ENCODE measurements at regions of chr3 and their contacts with region 1.

Region 1: GRCh38 chr3:128969993-128970739 is 23.7 kb downstream of the CFAP92 start:
- DNase-seq: peak; percentile 76
- H3K4me3 Mint-ChIP-seq: no peak overlapping the region
- H3K27ac Mint-ChIP-seq: no peak overlapping the region
- H3K4me1 Mint-ChIP-seq: peaks cover 13% of the 10 kb centered on the region
- H3K27me3 Mint-ChIP-seq: peaks cover 4% of the 10 kb centered on the region

Region 2: GRCh38 chr3:128647307-128647706 is 322.9 kb before region 1 on chr3:
- CTCF ChIA-PET with region 1: no interaction called
- POLR2A ChIA-PET with region 1: no interaction called
- DNase-seq: no peak
- H3K4me3 Mint-ChIP-seq: no peak overlapping the region
- H3K27ac Mint-ChIP-seq: no peak overlapping the region
- H3K4me1 Mint-ChIP-seq: peaks cover 35% of the 10 kb centered on the region
- H3K27me3 Mint-ChIP-seq: no peaks in the 10 kb centered on the region

Region 3: DNA sequence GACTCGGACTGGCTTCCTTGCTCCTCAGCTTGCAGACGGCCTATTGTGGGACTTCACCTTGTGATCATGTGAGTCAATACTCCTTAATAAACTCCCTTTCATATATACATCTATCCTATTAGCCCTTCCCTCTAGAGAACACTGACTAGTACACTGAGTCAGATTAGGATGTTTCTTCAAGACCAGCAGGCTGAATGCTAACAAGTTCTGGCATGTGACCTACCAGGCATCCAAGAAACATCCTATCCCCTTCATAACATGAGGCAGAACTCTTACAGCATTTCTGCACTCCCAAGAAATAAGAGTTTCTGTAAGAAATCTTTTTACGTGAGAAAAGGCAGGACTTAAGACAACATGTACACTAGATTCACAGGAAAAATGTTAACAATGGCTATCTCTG is 14.4 kb after region 1 on chr3:
- CTCF ChIA-PET with region 1: interaction called, 12 read pairs
- POLR2A ChIA-PET with region 1: no interaction called
- DNase-seq: no peak
- H3K4me3 Mint-ChIP-seq: no peak overlapping the region
- H3K27ac Mint-ChIP-seq: no peak overlapping the region
- H3K4me1 Mint-ChIP-seq: peaks cover 3% of the 10 kb centered on the region
- H3K27me3 Mint-ChIP-seq: no peaks in the 10 kb centered on the region

Region 4: DNA sequence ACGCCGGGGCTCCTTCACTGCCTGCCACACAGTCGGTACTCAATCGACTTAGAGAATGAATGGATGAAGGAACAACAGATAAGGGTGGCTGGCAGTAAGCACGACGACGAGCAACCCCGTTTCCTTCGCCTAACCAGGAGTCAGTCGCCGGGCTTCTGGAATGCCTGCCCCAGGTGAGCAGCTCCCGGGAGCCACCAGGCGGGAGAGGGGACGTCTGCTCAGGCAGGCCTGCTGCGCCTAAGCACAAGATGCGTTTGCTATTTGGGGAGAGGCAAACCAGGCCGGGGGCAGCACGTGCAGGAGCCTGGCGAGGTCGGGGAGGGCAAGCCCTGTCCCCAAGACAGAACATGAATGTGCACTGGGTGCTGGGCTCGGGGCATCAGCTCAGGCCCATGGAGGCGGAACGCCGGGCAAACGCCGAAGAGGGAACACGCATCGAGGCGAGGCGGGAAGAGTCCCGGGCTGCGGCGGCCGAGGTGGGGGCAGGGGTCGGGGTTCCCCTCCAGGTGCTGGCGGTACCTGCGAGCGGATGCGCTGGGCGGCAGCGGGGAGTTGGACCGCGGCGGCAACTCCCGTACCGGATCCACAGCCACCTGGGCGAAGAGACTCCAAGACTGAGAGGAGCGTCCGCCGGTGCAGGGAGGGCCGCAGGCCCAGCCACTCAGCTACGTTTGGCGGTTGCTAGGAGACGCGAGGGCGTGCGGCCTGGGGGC is 23.5 kb after region 1 on chr3 and contains the start of gene CFAP92:
- CTCF ChIA-PET with region 1: interaction called, 11 read pairs
- POLR2A ChIA-PET with region 1: interaction called, 3 read pairs
- DNase-seq: peak; percentile 93
- H3K4me3 Mint-ChIP-seq: peak within 1 kb of the TSS; percentile 43
- H3K27ac Mint-ChIP-seq: peak within 1 kb of the TSS; percentile 76
- H3K4me1 Mint-ChIP-seq: peaks cover 38% of the 10 kb centered on the region
- H3K27me3 Mint-ChIP-seq: peaks cover 10% of the 10 kb centered on the region
- total RNA-seq, gene CFAP92: 0.10 TPM in 1 of 2 experiments, not detected in the other

Region 5: DNA sequence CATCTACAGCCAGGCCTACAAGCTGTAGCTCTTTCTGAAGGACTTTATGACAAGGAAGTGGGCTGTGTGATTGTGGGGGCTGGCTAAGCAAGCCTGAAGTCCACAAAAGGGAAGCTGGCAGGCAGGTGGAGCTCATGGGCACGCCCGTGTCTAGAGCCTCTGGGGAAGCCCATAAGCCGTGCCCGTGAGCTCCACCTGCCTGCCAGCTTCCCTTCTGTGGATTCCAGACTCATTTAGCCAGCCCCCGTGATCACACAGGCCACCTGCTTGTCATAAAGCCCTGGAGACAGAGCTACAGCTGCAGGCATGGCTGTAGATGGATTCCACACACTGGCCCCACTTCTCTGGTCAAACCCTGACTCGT is 46.2 kb after region 1 on chr3:
- CTCF ChIA-PET with region 1: interaction called, 11 read pairs
- POLR2A ChIA-PET with region 1: interaction called, 3 read pairs
- DNase-seq: peak; percentile 69
- H3K4me3 Mint-ChIP-seq: peak overlapping the region; percentile 70
- H3K27ac Mint-ChIP-seq: peak overlapping the region; percentile 98
- H3K4me1 Mint-ChIP-seq: peaks cover 37% of the 10 kb centered on the region
- H3K27me3 Mint-ChIP-seq: no peaks in the 10 kb centered on the region

Region 6: GRCh38 chr3:129026728-129027543 is 56.8 kb after region 1 on chr3:
- CTCF ChIA-PET with region 1: interaction called, 11 read pairs
- POLR2A ChIA-PET with region 1: no interaction called
- DNase-seq: peak; percentile 95
- H3K4me3 Mint-ChIP-seq: peak overlapping the region; percentile 75
- H3K27ac Mint-ChIP-seq: peak overlapping the region; percentile 94
- H3K4me1 Mint-ChIP-seq: peaks cover 17% of the 10 kb centered on the region
- H3K27me3 Mint-ChIP-seq: no peaks in the 10 kb centered on the region

Region 7: DNA sequence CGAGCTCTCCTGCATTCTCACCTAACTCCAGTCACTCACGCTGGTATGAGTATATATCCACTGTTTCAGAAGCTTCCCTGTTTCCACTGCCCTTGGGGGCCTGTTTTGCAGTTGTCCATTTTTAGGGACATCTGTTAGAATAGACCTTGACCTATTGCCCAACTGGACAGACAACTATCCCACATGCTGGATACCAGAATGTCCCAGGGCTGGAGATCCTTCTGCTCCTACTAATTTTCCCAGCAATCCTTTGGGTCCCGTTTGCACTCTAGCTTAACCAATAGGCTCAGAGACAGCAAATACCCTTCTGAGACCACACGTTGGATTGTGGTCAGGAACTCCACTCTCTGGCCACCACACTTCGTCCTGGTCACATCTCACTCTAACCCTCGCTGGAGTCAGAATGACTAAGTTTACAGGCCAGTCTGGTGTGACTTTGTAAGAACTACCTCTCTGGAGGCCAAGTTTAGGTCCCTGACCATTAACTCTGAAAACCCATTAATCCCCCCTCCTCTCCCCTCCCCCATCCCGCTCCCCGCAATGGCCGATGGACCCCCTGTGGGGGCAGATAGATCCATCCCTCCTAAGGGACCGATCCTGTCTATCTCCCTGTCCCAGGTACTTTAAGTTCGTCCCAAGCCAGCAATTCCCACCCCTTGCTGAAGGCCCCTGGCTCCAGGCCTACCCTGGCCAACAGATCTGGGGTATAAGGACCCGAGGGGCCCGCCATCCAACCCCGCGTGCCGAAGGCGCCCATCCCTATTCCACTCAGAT is 344.0 kb after region 1 on chr3:
- CTCF ChIA-PET with region 1: interaction called, 15 read pairs
- POLR2A ChIA-PET with region 1: no interaction called
- DNase-seq: no peak
- H3K4me3 Mint-ChIP-seq: peak overlapping the region; percentile 83
- H3K27ac Mint-ChIP-seq: peak overlapping the region; percentile 77
- H3K4me1 Mint-ChIP-seq: peaks cover 38% of the 10 kb centered on the region
- H3K27me3 Mint-ChIP-seq: no peaks in the 10 kb centered on the region

Measured in activated CD4-positive, alpha-beta T cell treated with anti-CD3 and anti-CD28 coated beads, Interleukin-2, amount 10 ng/mL, durations not matched to agents 7 days and 5 days (primary cell).